ENCODE measurements at regions of chr2 and their contacts with region 1.

Region 1: GRCh38 chr2:168192839-168193616 is 54.4 kb downstream of the STK39 start:
- DNase-seq: peak; percentile 64 to 80 (median 70)
- H3K4me3 ChIP-seq: peak overlapping the region in 1 of 2 donors; percentile 25
- H3K4me3 Mint-ChIP-seq: peak overlapping the region; percentile 60 to 87 (median 76)
- H3K27ac ChIP-seq: no peak overlapping the region
- H3K27ac Mint-ChIP-seq: peak overlapping the region; percentile 5 to 91 (median 74)
- H3K4me1 ChIP-seq: peaks cover 76% of the 10 kb centered on the region
- H3K4me1 Mint-ChIP-seq: peaks cover 61 to 92% (median 75%) of the 10 kb centered on the region in 4 donors
- H3K27me3 ChIP-seq: no peaks in the 10 kb centered on the region
- H3K27me3 Mint-ChIP-seq: no peaks in the 10 kb centered on the region

Region 2: DNA sequence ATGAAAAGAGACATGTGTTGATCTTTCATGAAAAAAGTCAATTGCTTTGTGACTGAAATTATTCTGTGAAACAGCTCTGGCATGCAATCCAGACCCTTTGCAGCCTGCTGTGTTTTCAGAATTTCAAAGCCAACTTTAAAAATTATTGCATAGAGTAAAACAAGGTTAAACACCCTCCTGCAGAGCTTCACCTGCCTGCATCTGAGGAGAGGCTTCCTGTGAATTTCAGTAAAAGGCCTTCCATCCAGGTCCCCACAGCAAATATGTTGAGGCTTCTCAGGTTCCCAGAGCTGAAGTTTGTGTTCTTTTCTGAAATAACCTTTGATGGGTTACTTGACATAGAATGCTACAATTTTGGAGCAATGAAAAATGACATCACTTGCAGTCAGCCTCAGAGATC is 1300.6 kb before region 1 on chr2:
- CTCF ChIA-PET with region 1: no interaction called
- POLR2A ChIA-PET with region 1: no interaction called
- intact Hi-C with region 1: no loop called
- DNase-seq: no peak
- H3K4me3 ChIP-seq: no peak overlapping the region
- H3K4me3 Mint-ChIP-seq: no peak overlapping the region
- H3K27ac ChIP-seq: no peak overlapping the region
- H3K27ac Mint-ChIP-seq: no peak overlapping the region
- H3K4me1 ChIP-seq: no peaks in the 10 kb centered on the region
- H3K4me1 Mint-ChIP-seq: no peaks in the 10 kb centered on the region
- H3K27me3 ChIP-seq: no peaks in the 10 kb centered on the region
- H3K27me3 Mint-ChIP-seq: no peaks in the 10 kb centered on the region

Region 3: GRCh38 chr2:168231609-168232241 is 38.7 kb after region 1 on chr2:
- CTCF ChIA-PET with region 1: no interaction called
- POLR2A ChIA-PET with region 1: no interaction called
- intact Hi-C with region 1: loop called (anchors 2 kb)
- DNase-seq: no peak
- H3K4me3 ChIP-seq: no peak overlapping the region
- H3K4me3 Mint-ChIP-seq: peak overlapping the region in 1 of 8 donors; percentile 30
- H3K27ac ChIP-seq: no peak overlapping the region
- H3K27ac Mint-ChIP-seq: peak overlapping the region in 2 of 7 donors; percentile 2 to 5
- H3K4me1 ChIP-seq: peaks cover 24% of the 10 kb centered on the region
- H3K4me1 Mint-ChIP-seq: peaks cover 27 to 54% (median 40%) of the 10 kb centered on the region in 4 donors
- H3K27me3 ChIP-seq: no peaks in the 10 kb centered on the region
- H3K27me3 Mint-ChIP-seq: no peaks in the 10 kb centered on the region